Aorta (tissue), 5 donors: ENCODE measurements at regions of chr17 and their contacts with region 1.

Region 1: DNA sequence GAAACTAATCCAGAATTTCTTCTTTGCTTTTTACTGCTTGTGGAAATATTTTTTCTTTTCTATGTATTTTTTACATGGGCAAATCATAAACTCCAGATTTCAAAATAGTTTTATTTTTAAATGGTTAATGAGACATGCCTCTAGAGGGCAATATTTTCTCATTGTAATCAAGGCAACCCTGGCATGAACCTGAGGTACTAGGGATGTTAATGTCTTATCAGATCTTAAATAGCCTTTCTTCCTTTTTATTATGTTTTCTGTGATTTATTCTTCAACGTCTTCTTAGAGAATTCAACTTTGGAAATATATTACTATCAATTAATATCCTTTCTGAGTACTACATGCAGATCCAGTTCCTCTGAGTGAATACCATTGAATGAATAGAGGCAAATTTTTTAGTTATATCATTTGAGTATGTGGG is 324.7 kb downstream of the BCAS3 start:
- DNase-seq: no peak
- ATAC-seq: no peak
- H3K4me3 ChIP-seq: no peak overlapping the region
- H3K27ac ChIP-seq: no peak overlapping the region
- H3K4me1 ChIP-seq: no peaks in the 10 kb centered on the region
- H3K27me3 ChIP-seq: no peaks in the 10 kb centered on the region

Region 2: GRCh38 chr17:60354223-60354622 is 648.1 kb before region 1 on chr17:
- intact Hi-C with region 1: no loop called
- DNase-seq: no peak
- ATAC-seq: no peak
- H3K4me3 ChIP-seq: no peak overlapping the region
- H3K27ac ChIP-seq: no peak overlapping the region
- H3K4me1 ChIP-seq: peaks cover 2 to 3% of the 10 kb centered on the region in 2 donors
- H3K27me3 ChIP-seq: no peaks in the 10 kb centered on the region

Region 3: GRCh38 chr17:61208301-61209105 is 206.2 kb after region 1 on chr17:
- intact Hi-C with region 1: loop called in 1 of 2 experiments (anchors 10 kb)
- DNase-seq: no peak
- ATAC-seq: peak; percentile 65
- H3K4me3 ChIP-seq: peak overlapping the region in 1 of 2 donors; percentile 59
- H3K27ac ChIP-seq: no peak overlapping the region
- H3K4me1 ChIP-seq: peaks cover 3 to 6% of the 10 kb centered on the region in 2 donors
- H3K27me3 ChIP-seq: no peaks in the 10 kb centered on the region